ENCODE measurements at regions of chr1 and their contacts with region 1.

Region 1: GRCh38 chr1:169072945-169073730 is 33.4 kb upstream of the ATP1B1 start:
- DNase-seq: no peak
- ATAC-seq: no peak
- H3K4me3 ChIP-seq: no peak overlapping the region
- H3K27ac ChIP-seq: no peak overlapping the region
- H3K4me1 ChIP-seq: peaks cover 0 to 5% (median 0%) of the 10 kb centered on the region in 12 donors
- H3K27me3 ChIP-seq: no peaks in the 10 kb centered on the region
- CTCF ChIP-seq: no peak
- POLR2A ChIP-seq: no peak

Region 2: DNA sequence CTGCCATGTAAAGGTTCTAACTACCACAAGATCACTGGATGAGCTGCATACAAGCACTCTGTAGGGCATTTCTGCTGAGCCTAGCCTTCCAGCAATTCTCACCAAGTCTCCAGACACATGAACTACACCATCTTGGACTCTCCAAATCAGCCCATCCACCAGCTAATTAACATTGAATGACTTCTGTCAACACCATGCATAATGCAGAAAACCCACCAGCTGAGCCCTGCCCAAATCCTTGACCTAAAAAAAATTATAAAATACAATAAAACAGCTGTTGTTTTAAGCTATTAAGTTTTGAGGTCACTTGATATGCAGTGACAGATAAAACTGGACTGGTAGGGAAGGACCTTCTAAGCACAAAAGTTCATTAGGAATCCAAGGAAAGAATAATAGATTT is 11.0 kb before region 1 on chr1:
- intact Hi-C with region 1: loop called in 1 of 10 experiments (anchors 2 kb)
- DNase-seq: no peak
- ATAC-seq: no peak
- H3K4me3 ChIP-seq: no peak overlapping the region
- H3K27ac ChIP-seq: no peak overlapping the region
- H3K4me1 ChIP-seq: peaks cover 0 to 22% (median 8%) of the 10 kb centered on the region in 12 donors
- H3K27me3 ChIP-seq: no peaks in the 10 kb centered on the region
- CTCF ChIP-seq: no peak
- POLR2A ChIP-seq: no peak

Measured in heart left ventricle (tissue), 16 donors.